Transverse colon (tissue), 4 donors: ENCODE measurements at regions of chrX and their contacts with region 1.

Region 1: DNA sequence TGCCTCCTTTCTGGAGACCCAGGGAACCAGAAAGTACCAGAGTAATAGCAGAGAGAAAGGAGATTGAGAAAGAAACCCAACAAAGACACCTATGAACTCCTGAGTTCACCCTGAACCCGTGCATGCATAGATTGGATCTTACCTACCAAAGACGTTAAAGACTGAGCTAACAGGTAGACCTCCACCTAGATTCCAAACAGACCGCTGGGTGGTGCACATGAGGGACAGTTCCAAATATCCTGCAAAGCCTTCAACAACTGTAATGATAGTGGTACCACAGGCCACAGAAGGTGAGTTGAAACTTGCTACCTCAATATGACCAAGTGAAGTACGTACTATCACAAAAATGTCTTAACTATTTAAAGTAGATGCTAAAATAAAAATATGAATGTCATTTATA is 34.0 kb upstream of the NR0B1 start:
- DNase-seq: no peak
- H3K4me3 ChIP-seq: no peak overlapping the region
- H3K27ac ChIP-seq: no peak overlapping the region
- H3K4me1 ChIP-seq: no peaks in the 10 kb centered on the region
- H3K27me3 ChIP-seq: no peaks in the 10 kb centered on the region
- CTCF ChIP-seq: no peak
- EP300 ChIP-seq: no peak
- POLR2A ChIP-seq: no peak

Region 2: DNA sequence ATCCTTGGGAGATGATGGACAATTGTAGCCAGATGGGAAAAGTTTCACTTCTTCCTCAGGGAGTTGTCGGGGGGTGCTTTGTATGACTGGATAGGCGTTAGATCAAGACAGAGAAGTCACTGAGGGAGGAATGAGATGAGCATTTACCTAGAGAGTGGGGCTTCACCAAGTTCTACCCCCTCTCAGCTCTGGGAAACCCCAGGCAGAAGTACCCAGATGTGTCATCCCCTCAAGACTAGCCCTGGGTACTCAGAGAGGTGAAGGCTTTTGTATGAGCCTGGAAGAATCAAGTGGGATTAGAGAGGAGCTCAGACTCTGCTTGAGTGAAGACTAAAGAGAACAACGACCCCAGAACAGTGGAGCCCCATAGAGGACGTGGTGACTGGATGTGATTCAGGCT is 94.3 kb before region 1 on chrX:
- in situ Hi-C with region 1: loop called in 1 of 4 experiments (anchors 25 kb)
- intact Hi-C with region 1: no loop called
- DNase-seq: no peak
- H3K4me3 ChIP-seq: no peak overlapping the region
- H3K27ac ChIP-seq: no peak overlapping the region
- H3K4me1 ChIP-seq: no peaks in the 10 kb centered on the region
- H3K27me3 ChIP-seq: no peaks in the 10 kb centered on the region
- CTCF ChIP-seq: no peak
- EP300 ChIP-seq: no peak
- POLR2A ChIP-seq: no peak

Region 3: GRCh38 chrX:31761886-31762285 is 1418.7 kb after region 1 on chrX:
- in situ Hi-C with region 1: no loop called
- intact Hi-C with region 1: no loop called
- DNase-seq: no peak
- H3K4me3 ChIP-seq: no peak overlapping the region
- H3K27ac ChIP-seq: no peak overlapping the region
- H3K4me1 ChIP-seq: no peaks in the 10 kb centered on the region
- H3K27me3 ChIP-seq: no peaks in the 10 kb centered on the region
- CTCF ChIP-seq: no peak
- EP300 ChIP-seq: no peak
- POLR2A ChIP-seq: no peak